HCT116 (cell line): ENCODE measurements at regions of chr10 and their contacts with region 1.

Region 1: DNA sequence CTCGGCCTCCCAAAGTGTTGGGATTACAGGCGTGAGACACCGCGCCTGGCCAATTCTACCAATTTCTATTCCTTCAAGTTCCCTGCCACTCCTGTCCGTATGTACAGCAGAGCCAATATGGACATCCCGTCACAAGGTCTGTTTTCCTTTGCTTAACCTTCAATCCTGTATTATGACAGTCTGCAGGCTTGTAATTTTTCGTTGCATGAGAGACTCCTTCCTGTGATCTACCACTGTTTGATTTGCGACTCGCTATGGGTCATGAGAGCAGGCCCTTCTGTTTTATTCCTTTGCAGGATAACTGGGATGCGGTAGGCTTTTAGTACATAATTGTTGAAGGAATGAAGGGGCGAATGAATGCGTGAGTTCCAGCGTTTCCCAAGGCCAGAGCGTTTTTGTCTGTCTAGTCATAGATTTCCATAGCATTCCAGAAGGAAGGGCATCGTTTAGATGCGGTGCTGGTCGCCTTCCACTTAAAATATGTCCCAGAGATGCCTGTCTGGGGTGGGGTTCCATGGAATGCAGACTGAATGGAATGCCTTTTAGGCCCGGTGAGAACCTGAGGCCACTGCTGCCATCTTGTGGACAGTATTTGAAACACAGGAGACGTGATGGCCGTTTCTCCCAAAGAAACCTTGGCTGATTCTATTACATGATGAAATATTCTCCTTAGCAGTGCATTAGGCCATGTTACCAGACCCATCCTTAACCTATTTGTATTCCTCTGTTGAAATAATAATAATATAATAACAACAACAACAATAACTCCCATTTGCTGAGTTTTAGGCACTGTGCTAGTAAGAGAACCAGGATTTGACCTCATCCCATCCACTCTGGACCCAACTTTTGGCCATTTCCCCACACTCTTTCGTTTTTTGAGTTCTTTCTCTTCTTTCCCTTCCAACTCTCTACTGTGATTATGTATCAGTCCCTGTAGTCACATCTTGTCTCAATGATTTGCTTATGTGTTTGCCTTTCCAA is 193.2 kb downstream of the MYOF start:
- DNase-seq: peak; percentile 78
- ATAC-seq: peak; percentile 96
- H3K4me3 ChIP-seq: peak overlapping the region in 1 of 2 experiments; percentile 29; a peak in 1 of 4 replicates
- H3K27ac ChIP-seq: peak overlapping the region; percentile 43; the same call in 1 of the 2 replicates
- H3K4me1 ChIP-seq: peaks cover 5 to 23% of the 10 kb centered on the region in 2 experiments
- H3K27me3 ChIP-seq: no peaks in the 10 kb centered on the region
- CTCF ChIP-seq: peak; percentile 67 to 85 (median 75)
- POLR2A ChIP-seq: no peak
- RAD21 ChIP-seq: peak; percentile 92

Region 2: DNA sequence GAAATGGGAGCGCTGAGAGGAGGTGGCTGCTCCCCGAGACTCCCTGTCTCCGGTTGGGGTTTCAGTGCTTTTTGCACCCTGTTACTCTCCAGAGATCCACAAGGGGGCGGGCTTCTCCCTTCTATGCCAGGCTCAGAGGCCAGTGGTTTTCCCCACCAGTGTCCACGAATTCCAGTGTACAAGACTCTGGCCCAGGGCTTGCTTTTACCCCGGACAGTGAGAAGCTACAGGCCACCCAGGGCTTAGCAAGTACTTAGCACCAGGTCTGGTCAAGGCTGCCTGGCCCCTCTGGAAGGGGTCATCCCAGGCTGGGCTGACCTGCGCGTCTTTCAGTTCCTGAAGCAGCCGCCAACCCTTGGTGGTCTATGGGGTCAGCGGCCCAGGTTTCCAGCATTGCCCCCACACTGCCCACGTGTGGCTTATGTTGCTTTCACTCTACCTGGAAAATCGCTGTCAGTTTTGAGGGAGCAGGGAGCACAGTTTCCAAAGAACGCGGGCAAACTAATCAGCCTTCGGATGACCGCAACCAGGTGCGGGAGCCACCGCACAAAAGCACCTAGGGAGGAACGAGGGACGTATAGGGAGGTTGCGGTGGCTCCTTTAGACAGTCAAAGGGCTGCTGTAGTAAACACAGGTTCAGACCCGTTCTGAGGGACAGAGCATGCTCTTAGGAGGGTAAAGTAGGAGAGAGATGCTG is 208.4 kb before region 1 on chr10:
- CTCF ChIA-PET with region 1: interaction called, 4 read pairs
- POLR2A ChIA-PET with region 1: no interaction called
- RAD21 ChIA-PET with region 1: no interaction called
- intact Hi-C with region 1: loop called (anchors 1 kb)
- DNase-seq: peak; percentile 18
- ATAC-seq: peak; percentile 94
- H3K4me3 ChIP-seq: peak overlapping the region in 1 of 2 experiments; percentile 28; a peak in 1 of 4 replicates
- H3K27ac ChIP-seq: no peak overlapping the region
- H3K4me1 ChIP-seq: peaks cover 0 to 10% of the 10 kb centered on the region in 2 experiments; a peak in 1 of 4 replicates
- H3K27me3 ChIP-seq: no peaks in the 10 kb centered on the region
- CTCF ChIP-seq: peak; percentile 73 to 90 (median 82)
- POLR2A ChIP-seq: no peak
- RAD21 ChIP-seq: peak; percentile 93

Region 3: GRCh38 chr10:93115661-93116383 is 173.1 kb before region 1 on chr10:
- CTCF ChIA-PET with region 1: interaction called, 4 read pairs
- POLR2A ChIA-PET with region 1: no interaction called
- RAD21 ChIA-PET with region 1: no interaction called
- intact Hi-C with region 1: loop called (anchors 2 kb)
- DNase-seq: peak; percentile 74
- ATAC-seq: peak; percentile 94
- H3K4me3 ChIP-seq: no peak overlapping the region
- H3K27ac ChIP-seq: no peak overlapping the region
- H3K4me1 ChIP-seq: peaks cover 0 to 5% of the 10 kb centered on the region in 2 experiments; a peak in 2 of 4 replicates
- H3K27me3 ChIP-seq: no peaks in the 10 kb centered on the region
- CTCF ChIP-seq: peak; percentile 47 to 70 (median 57); a peak in 5 of 6 replicates
- POLR2A ChIP-seq: no peak
- RAD21 ChIP-seq: peak; percentile 69